ENCODE measurements at regions of chr6 and their contacts with region 1.

Region 1: GRCh38 chr6:159134701-159135364 is 34.4 kb upstream of the FNDC1 start:
- DNase-seq: peak; percentile 82
- ATAC-seq: peak; percentile 87
- H3K4me3 Mint-ChIP-seq: no peak overlapping the region
- H3K27ac Mint-ChIP-seq: no peak overlapping the region
- H3K4me1 Mint-ChIP-seq: peaks cover 5% of the 10 kb centered on the region
- H3K27me3 Mint-ChIP-seq: peaks cover 18% of the 10 kb centered on the region

Region 2: GRCh38 chr6:158972241-158973233 is 162.3 kb before region 1 on chr6:
- CTCF ChIA-PET with region 1: interaction called, 13 read pairs
- POLR2A ChIA-PET with region 1: no interaction called
- DNase-seq: no peak
- ATAC-seq: peak; percentile 64
- H3K4me3 Mint-ChIP-seq: no peak overlapping the region
- H3K27ac Mint-ChIP-seq: no peak overlapping the region
- H3K4me1 Mint-ChIP-seq: no peaks in the 10 kb centered on the region
- H3K27me3 Mint-ChIP-seq: peaks cover 2% of the 10 kb centered on the region

Region 3: GRCh38 chr6:158999666-159000403 is 135.0 kb before region 1 on chr6 and contains the start of gene RSPH3:
- CTCF ChIA-PET with region 1: interaction called, 30 read pairs
- POLR2A ChIA-PET with region 1: no interaction called
- DNase-seq: peak; percentile 93
- ATAC-seq: peak; percentile 94
- H3K4me3 Mint-ChIP-seq: peak within 1 kb of the TSS; percentile 89
- H3K27ac Mint-ChIP-seq: peak within 1 kb of the TSS; percentile 81
- H3K4me1 Mint-ChIP-seq: peaks cover 35% of the 10 kb centered on the region
- H3K27me3 Mint-ChIP-seq: no peaks in the 10 kb centered on the region
- total RNA-seq, gene RSPH3: 1.4 TPM

Region 4: DNA sequence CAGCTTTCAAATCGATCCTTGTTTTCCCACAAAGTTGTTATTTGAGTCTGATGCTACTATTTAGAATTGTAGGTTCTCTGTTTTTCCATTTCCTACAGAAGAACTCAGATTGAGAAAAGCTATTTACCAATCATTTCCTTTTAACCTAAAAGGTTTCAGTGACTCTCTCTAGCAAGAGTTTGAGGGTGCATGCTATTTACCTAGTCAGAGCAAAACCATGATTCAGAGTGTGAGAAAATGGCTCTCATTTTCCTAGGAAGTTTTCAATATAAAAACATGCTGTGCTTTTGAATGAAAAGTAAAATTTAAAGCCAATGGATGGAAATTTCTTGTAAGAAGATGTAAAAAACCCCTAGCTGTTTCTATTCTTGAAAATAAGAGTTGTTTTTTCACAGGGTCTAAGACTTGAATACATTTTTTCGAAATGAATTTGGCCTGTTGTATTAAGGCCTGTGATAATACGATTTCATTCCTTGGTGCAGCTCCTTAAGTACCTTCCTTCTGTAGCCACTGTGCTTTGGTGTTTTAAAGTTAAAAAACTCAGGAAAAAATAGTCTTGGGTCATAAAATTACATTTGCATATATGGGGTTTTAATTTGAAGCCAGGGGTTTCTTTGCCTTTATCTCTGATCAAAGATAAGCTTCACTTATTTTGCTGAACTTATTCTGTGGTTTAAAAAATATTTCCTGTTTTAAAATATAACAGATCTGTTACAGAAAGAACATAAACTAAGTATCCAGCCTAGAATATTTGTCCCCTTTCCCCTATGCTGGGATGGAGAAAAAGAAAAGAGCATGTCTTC is 116.9 kb before region 1 on chr6:
- CTCF ChIA-PET with region 1: interaction called, 196 read pairs
- POLR2A ChIA-PET with region 1: no interaction called
- DNase-seq: peak; percentile 12
- ATAC-seq: peak; percentile 71
- H3K4me3 Mint-ChIP-seq: no peak overlapping the region
- H3K27ac Mint-ChIP-seq: peak overlapping the region; percentile 52
- H3K4me1 Mint-ChIP-seq: peaks cover 29% of the 10 kb centered on the region
- H3K27me3 Mint-ChIP-seq: no peaks in the 10 kb centered on the region

Region 5: GRCh38 chr6:159104163-159104925 is 30.5 kb before region 1 on chr6:
- CTCF ChIA-PET with region 1: interaction called, 170 read pairs
- POLR2A ChIA-PET with region 1: no interaction called
- DNase-seq: peak; percentile 87
- ATAC-seq: peak; percentile 59
- H3K4me3 Mint-ChIP-seq: peak overlapping the region; percentile 44
- H3K27ac Mint-ChIP-seq: peak overlapping the region; percentile 93
- H3K4me1 Mint-ChIP-seq: peaks cover 84% of the 10 kb centered on the region
- H3K27me3 Mint-ChIP-seq: no peaks in the 10 kb centered on the region

Region 6: DNA sequence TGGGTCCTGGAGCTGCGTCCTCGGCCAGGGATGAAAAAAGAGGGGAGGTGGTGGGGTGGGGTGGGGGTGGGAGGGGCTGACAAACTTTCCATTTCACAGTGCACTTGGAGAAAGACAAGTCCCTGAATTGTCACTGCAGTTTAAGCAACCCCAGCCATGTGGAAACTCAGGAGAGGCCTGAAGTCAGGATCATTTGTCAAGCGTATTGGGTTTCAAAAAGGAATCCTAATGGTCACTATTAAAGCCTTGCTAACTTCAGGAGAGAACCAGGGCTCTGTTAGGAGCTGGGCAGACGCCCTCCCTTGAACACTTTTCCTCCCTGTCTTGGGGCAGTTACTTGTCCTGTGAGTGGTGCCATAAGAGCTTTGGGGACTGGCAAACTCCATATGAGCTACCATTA is 194.2 kb after region 1 on chr6:
- CTCF ChIA-PET with region 1: no interaction called
- POLR2A ChIA-PET with region 1: no interaction called
- DNase-seq: no peak
- ATAC-seq: no peak
- H3K4me3 Mint-ChIP-seq: no peak overlapping the region
- H3K27ac Mint-ChIP-seq: no peak overlapping the region
- H3K4me1 Mint-ChIP-seq: no peaks in the 10 kb centered on the region
- H3K27me3 Mint-ChIP-seq: peaks cover 8% of the 10 kb centered on the region

Region 7: GRCh38 chr6:159608961-159609651 is 474.3 kb after region 1 on chr6:
- CTCF ChIA-PET with region 1: no interaction called
- POLR2A ChIA-PET with region 1: no interaction called
- DNase-seq: no peak
- ATAC-seq: no peak
- H3K4me3 Mint-ChIP-seq: no peak overlapping the region
- H3K27ac Mint-ChIP-seq: no peak overlapping the region
- H3K4me1 Mint-ChIP-seq: no peaks in the 10 kb centered on the region
- H3K27me3 Mint-ChIP-seq: peaks cover 7% of the 10 kb centered on the region